ENCODE measurements at regions of chr19 and their contacts with region 1.

Region 1: DNA sequence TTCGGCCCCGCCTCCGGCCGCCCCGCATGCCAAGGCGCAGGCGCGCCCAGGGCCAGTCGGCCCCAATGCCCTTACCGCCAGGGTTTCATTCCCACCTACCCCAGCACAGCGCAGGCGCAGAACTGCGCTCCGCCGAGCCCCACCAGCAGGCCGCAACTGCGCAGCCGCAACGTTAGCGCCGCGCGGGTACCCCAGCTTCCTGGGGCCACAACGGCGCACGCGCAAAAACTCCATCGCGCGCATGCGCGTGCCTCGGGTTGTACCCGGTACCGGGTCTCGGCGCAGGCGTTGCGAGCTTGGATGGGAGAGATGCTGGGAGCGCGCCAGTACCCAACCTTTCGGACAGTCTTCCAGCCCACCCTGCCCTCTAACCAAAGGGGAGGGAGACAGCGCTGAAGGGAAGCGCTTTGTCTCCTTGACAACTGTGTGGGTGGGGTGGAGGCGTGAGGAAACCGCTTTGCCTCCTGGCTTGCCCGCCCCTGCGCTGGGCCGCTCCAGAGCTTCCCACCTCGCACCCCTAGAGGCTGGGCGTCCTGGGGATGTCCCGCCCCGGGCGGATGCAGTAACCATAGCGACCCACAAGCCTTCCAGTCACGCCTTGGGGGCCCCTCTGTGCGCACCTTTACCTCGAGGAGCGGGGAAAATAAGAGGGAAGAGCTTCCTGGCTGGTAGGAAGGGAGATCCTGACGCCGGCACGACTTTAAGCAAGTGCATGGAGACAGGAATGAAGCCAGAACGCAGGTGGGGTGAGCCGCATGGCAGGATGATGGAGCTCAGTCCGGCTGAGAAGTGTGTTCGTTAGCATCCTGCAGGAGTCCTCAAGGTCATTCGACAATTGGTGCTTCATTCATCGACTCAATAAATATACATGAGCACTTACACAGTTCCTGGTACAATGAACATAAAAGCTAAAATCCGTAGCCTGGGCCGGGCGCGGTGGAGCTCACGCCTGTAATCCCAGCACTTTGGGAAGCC is 525 bp upstream of the MYPOP start:
- DNase-seq: peak; percentile 99 to 100
- ATAC-seq: peak; percentile 85 to 93 (median 87)
- H3K4me3 ChIP-seq: peak overlapping the region; percentile 56
- H3K4me3 Mint-ChIP-seq: peak overlapping the region; percentile 96
- H3K27ac ChIP-seq: peak overlapping the region; percentile 73
- H3K27ac Mint-ChIP-seq: peak overlapping the region; percentile 83 to 92
- H3K4me1 ChIP-seq: peaks cover 22% of the 10 kb centered on the region
- H3K4me1 Mint-ChIP-seq: peaks cover 0 to 30% of the 10 kb centered on the region in 2 donors
- H3K27me3 ChIP-seq: no peaks in the 10 kb centered on the region
- H3K27me3 Mint-ChIP-seq: peaks cover 0 to 3% of the 10 kb centered on the region in 2 donors
- CTCF ChIP-seq: no peak

Region 2: DNA sequence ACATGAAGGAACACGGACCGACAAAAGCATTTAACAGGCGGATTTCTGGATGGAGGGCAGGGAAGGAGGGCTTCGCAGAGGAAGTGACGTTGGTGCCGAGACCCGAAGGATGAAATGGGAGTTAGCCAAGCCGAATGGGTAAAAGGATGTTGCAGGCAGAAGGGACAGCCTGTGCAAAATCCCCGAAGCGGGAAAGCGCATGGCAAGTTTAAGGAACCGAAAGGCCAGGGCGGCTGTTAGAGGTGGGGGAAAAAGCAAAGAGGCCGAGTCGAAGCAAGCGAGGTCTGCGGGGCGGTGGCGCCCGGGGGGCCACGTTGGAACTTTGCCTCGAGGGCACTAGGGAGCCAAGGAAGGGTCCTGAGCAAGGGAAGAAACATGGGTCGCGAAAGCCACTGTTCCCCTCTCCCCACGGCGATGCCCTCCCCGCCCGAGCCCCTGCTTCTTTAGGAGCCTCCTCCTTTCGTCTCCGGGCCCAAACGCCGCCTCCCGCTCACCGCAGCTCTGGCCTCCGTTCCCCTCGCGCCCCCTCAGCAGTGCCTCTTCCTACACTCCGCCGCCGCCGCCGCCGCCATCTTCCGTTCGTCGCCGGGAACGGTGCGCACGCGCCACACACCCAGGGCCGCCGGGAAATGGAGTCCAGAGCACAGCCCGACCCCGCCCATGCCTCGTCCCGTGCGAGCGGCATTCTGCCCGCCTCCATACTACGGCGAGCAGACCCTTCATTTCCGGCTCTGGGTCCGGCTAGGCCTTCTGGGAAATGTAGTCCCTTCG is 40.2 kb before region 1 on chr19 and contains the start of gene SYMPK:
- intact Hi-C with region 1: loop called (anchors 1 kb)
- DNase-seq: peak; percentile 96 to 99
- ATAC-seq: peak; percentile 97 to 99 (median 97)
- H3K4me3 ChIP-seq: peak within 1 kb of the TSS; percentile 96
- H3K4me3 Mint-ChIP-seq: peak within 1 kb of the TSS; percentile 99
- H3K27ac ChIP-seq: peak within 1 kb of the TSS; percentile 94
- H3K27ac Mint-ChIP-seq: peak within 1 kb of the TSS; percentile 91 to 96
- H3K4me1 ChIP-seq: peaks cover 24% of the 10 kb centered on the region
- H3K4me1 Mint-ChIP-seq: peaks cover 21 to 43% of the 10 kb centered on the region in 2 donors
- H3K27me3 ChIP-seq: peaks cover 11% of the 10 kb centered on the region
- H3K27me3 Mint-ChIP-seq: peaks cover 16 to 24% of the 10 kb centered on the region in 2 donors
- CTCF ChIP-seq: no peak
- total RNA-seq, gene SYMPK: 86.4 to 94.8 (median 86.7) TPM

Region 3: DNA sequence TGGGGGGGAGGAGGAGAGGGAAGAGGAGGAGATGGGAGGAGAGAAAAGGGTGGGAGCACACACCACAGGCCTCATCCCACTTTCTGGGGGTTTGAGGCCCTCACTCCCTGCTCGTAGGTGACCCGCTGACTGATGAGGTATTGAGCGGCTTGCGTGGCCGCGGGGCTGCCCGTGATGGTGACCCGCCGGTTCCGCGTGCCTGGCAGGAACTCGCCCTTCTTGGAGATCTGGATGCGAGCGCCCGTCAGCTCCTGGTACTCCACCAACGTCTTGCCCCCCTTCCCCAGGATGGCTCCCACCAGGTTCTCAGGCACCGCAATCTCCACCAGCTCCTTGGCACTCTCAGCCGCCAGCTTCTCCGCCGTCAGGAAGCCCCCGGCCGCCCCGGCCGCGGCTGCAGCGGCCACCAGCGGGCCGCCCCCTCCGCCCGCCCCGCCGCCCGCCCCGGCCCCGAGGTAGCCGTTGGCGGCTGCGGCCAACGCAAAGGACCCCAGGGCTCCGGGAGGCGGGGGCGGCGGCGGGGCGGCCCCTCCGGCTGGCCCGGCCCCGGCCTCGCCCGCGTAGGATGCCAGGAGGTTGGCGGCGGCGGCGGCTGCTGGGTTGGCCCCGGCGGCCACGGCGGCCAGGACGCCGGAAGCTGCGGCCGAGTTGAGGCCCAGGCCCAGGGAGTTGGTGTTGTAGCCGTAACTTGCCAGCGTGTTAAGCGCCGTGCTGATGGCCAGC is 37.0 kb after region 1 on chr19:
- intact Hi-C with region 1: no loop called
- DNase-seq: no peak
- ATAC-seq: no peak
- H3K4me3 ChIP-seq: no peak overlapping the region
- H3K4me3 Mint-ChIP-seq: no peak overlapping the region
- H3K27ac ChIP-seq: no peak overlapping the region
- H3K27ac Mint-ChIP-seq: no peak overlapping the region
- H3K4me1 ChIP-seq: peaks cover 2% of the 10 kb centered on the region
- H3K4me1 Mint-ChIP-seq: no peaks in the 10 kb centered on the region
- H3K27me3 ChIP-seq: peaks cover 2% of the 10 kb centered on the region
- H3K27me3 Mint-ChIP-seq: peaks cover 41 to 51% of the 10 kb centered on the region in 2 donors
- CTCF ChIP-seq: no peak